Right ventricle myocardium inferior (tissue), 1 donor: ENCODE measurements at regions of chr3 and their contacts with region 1.

Region 1: GRCh38 chr3:64267721-64268604 is 42.7 kb upstream of the PRICKLE2 start:
- DNase-seq: peak; percentile 71
- ATAC-seq: peak; percentile 87

Region 2: DNA sequence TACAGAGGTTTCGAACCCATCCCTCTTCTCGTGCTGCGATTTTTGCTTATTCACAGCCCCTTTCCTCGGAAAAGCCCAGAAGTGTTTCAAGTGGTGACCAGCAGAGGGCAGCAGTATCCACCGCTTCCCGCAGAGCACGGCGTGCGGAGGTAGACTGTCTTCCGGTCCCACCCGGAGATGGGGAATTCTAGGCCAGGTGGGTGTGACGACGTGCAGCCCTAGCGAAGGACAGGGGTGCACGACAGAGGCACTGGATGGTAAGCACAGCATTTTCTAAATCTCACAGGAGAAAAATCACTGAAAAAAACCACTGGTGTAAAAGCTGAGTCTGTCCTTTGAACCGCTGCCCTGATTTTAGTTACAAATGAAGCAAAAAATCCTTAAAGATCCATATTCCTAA is 237.2 kb before region 1 on chr3:
- intact Hi-C with region 1: loop called (anchors 5 kb)
- DNase-seq: peak; percentile 82
- ATAC-seq: peak; percentile 88

Region 3: GRCh38 chr3:64089118-64089785 is 178.7 kb before region 1 on chr3:
- intact Hi-C with region 1: no loop called
- DNase-seq: no peak
- ATAC-seq: peak; percentile 67

Region 4: GRCh38 chr3:64150623-64151207 is 117.2 kb before region 1 on chr3:
- intact Hi-C with region 1: loop called (anchors 5 kb)
- DNase-seq: peak; percentile 81
- ATAC-seq: peak; percentile 94

Region 5: DNA sequence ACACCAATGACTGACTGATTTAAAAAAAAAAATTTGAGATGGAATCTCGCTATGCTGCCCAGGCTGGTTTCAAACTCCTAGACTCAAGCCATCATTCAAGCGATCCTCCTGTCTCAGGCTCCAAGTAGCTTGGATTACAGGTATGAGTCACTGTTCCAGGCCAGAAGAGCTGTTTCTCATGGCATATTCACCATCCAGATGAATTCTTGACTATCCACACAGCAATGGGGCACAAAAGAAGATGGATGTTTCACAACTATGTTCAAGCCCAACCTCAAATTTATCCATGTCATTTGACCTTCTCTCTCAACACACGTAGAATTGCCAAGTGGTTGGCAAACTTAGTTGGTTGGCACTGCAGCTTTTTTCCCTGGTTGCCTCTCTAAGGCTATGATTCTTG is 83.3 kb before region 1 on chr3:
- intact Hi-C with region 1: loop called (anchors 2 kb)
- DNase-seq: no peak
- ATAC-seq: no peak

Region 6: GRCh38 chr3:64224826-64225610 is 42.9 kb before region 1 on chr3 and contains the start of gene PRICKLE2:
- intact Hi-C with region 1: loop called (anchors 5 kb)
- DNase-seq: peak; percentile 83
- ATAC-seq: peak; percentile 69
- total RNA-seq, gene PRICKLE2: 7.7 TPM

Region 7: DNA sequence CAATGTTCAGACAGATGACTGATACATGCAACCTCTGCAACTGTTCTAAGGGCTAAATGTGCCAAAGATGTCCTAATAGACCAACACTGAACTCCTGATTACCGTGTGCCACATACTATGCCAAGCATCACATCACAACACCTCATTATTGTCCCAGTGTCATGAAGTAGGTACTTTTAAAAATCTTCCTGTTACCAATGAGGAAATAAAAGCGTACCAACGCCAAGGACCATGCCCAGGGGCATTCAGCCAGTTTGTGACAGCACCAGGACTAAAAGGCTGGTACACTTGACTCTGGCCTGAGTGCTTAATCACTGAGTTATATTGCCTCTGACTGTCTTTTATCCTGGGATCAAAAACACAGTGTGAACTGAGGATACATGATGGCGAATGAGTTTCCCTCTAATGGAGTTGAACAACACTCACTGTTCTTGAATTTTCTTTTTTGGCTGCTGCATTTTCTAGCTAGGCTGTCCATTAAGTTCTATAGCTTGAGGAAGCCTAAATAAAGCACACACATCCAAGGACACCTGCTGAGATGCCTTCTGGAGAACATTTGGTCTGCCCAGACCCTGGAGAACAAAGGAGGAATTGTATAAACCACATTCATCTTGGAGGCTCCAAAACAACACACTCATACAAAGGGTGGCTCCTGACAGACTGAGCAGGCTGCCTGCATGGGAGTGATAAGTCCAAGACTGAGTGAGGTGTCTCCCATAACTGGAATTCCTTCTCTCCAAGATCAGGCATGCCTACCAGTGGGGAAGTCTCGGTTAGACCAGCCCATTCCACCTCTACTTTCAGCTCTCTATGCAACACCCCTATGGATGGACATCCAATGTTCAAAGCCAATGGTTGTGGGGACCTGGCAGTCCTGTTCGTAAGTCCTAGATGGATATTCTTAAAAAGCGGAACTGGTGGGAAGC is 84.0 kb after region 1 on chr3:
- intact Hi-C with region 1: loop called (anchors 5 kb)
- DNase-seq: no peak
- ATAC-seq: peak; percentile 53

Region 8: DNA sequence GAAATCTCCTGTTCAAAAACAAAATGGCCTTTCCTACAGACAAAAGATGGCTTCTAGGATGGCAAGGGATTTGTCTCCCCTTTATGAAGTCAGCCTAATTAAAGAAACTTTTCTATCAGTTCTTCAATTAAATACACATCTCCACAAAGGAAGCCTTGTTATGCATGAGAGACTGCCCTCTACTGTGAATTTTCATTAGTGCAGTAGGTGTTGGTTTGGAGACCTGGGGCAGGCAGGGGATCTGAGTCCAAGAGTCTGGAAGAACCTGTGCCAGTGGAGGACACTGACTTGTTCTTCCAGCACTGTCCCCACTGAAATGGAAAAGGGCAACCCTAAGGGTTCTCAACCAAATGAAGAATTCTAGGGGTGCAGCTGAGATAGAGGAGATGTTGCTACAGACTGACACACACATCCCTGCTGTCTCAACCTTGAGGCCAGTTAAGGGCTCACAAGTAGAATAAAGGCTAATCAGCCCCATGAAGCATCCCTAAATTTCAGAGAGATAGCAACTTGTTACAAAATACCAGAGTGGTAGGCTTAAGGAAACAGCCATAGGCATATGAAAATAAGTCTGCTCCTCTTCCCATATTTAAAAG is 131.3 kb after region 1 on chr3:
- intact Hi-C with region 1: loop called (anchors 10 kb)
- DNase-seq: no peak
- ATAC-seq: peak; percentile 67